Transverse colon (tissue), 4 donors: ENCODE measurements at regions of chr1 and their contacts with region 1.

Region 1: DNA sequence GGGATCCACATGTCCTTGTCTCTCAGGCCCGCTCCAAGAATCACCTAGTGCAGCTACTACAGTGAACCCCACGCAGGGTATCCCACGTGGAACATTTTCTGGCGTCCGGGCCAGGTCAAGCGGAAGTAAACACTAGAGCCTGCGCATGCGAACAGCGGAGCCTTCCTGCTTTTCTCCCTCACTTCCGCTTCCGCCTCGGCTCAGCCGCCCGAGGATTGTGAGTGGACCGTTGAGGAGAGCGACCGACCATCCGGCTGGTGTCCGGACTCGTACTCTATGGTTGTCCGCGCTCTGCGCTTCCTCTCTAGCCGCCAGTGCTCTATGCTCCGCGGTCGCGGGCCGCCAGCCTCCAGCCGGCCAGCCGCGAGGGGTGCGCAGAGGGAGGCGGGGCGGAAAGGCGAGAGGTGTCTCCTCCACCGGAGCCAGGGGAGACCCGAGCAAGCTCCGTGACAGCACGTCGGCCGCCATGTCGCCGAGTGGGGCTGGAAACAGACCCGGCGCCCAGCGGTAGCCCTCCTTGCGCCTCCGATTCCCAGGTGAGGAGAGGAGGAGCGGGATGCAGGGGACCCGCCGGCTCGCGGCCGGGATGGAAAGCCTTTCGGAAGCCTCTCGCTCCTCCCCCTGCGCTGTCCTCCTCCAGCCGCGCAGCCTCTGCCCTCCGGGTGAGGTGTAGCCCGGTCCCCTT is at the starts of genes CNST and TFB2M:
- DNase-seq: peak; percentile 98
- H3K4me3 ChIP-seq: peak within 1 kb of the TSS; percentile 79 to 94 (median 88)
- H3K27ac ChIP-seq: peak within 1 kb of the TSS; percentile 98 to 99 (median 98)
- H3K4me1 ChIP-seq: peaks cover 25 to 60% (median 50%) of the 10 kb centered on the region in 4 donors
- H3K27me3 ChIP-seq: no peaks in the 10 kb centered on the region
- CTCF ChIP-seq: no peak
- EP300 ChIP-seq: no peak
- POLR2A ChIP-seq: peak; percentile 97
- total RNA-seq, gene CNST: 44.0 to 83.0 (median 53.5) TPM
- total RNA-seq, gene TFB2M: 0.40 to 12.7 (median 5.5) TPM

Region 2: GRCh38 chr1:246506674-246507481 is 59.4 kb before region 1 on chr1 and contains the start of gene SMYD3:
- in situ Hi-C with region 1: no loop called
- intact Hi-C with region 1: no loop called
- DNase-seq: peak; percentile 78
- H3K4me3 ChIP-seq: peak within 1 kb of the TSS; percentile 62 to 96 (median 66)
- H3K27ac ChIP-seq: peak within 1 kb of the TSS; percentile 68 to 76 (median 74)
- H3K4me1 ChIP-seq: peaks cover 7 to 13% (median 10%) of the 10 kb centered on the region in 4 donors
- H3K27me3 ChIP-seq: no peaks in the 10 kb centered on the region
- CTCF ChIP-seq: peak in 2 of 5 experiments; percentile 15 to 18
- EP300 ChIP-seq: no peak
- POLR2A ChIP-seq: peak; percentile 45
- total RNA-seq, gene SMYD3: 10.5 to 31.3 (median 25.8) TPM

Region 3: GRCh38 chr1:246647113-246647512 is 80.8 kb after region 1 on chr1:
- in situ Hi-C with region 1: no loop called
- intact Hi-C with region 1: loop called (anchors 5 kb)
- DNase-seq: peak; percentile 24
- H3K4me3 ChIP-seq: no peak overlapping the region
- H3K27ac ChIP-seq: peak overlapping the region in 2 of 4 donors; percentile 64
- H3K4me1 ChIP-seq: no peaks in the 10 kb centered on the region
- H3K27me3 ChIP-seq: no peaks in the 10 kb centered on the region
- CTCF ChIP-seq: peak; percentile 36 to 48 (median 46)
- EP300 ChIP-seq: no peak
- POLR2A ChIP-seq: no peak

Region 4: DNA sequence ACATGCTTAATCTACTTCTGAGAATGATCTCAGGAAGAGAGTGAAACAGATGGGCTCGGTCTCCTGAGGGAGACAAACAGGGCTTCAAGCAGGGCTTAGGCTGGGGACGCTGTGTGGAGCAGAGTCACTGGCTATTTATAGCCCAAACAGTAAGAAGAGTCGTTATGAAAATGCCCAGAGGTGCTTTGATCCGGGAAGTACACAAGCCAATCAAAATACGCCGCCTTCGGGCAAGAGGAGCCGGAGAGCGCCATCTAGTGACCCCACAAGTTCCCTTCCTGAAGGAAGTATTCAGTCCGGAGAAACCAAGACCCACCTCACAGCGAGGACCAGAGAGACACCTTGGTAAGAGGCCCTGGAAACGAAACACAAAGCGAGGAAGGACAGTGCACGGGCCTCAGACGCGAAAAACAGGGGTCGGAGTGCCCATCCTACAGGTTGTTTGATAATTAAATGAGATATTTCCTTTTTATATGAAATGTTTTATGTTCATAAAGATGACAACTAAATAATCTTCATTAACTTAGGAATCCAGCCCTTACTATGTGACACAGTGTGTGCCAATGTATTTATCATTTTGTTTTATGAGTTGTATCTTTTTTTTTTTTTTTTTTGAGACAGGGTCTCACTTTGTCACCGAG is 132.9 kb after region 1 on chr1:
- in situ Hi-C with region 1: loop called in 2 of 4 experiments (anchors 10 to 25 kb)
- intact Hi-C with region 1: loop called (anchors 5 kb)
- DNase-seq: peak; percentile 93
- H3K4me3 ChIP-seq: peak overlapping the region in 2 of 4 donors; percentile 7 to 36
- H3K27ac ChIP-seq: peak overlapping the region; percentile 41 to 71 (median 52)
- H3K4me1 ChIP-seq: peaks cover 8 to 32% (median 17%) of the 10 kb centered on the region in 4 donors
- H3K27me3 ChIP-seq: no peaks in the 10 kb centered on the region
- CTCF ChIP-seq: peak; percentile 83 to 86 (median 84)
- EP300 ChIP-seq: no peak
- POLR2A ChIP-seq: no peak